ENCODE measurements at regions of chr9 and their contacts with region 1.

Region 1: GRCh38 chr9:136118320-136119060 is at the start of gene TMEM250:
- DNase-seq: peak; percentile 96
- ATAC-seq: peak; percentile 89
- H3K4me3 Mint-ChIP-seq: peak within 1 kb of the TSS; percentile 81
- H3K27ac Mint-ChIP-seq: peak within 1 kb of the TSS; percentile 74
- H3K4me1 Mint-ChIP-seq: peaks cover 7% of the 10 kb centered on the region
- H3K27me3 Mint-ChIP-seq: no peaks in the 10 kb centered on the region
- CTCF ChIP-seq: no peak
- total RNA-seq, gene TMEM250: 23.3 and 23.4 TPM in 2 replicates

Region 2: GRCh38 chr9:134475011-134475790 is 1643.3 kb before region 1 on chr9:
- CTCF ChIA-PET with region 1: no interaction called
- POLR2A ChIA-PET with region 1: no interaction called
- intact Hi-C with region 1: no loop called
- DNase-seq: peak; percentile 29
- ATAC-seq: peak; percentile 91
- H3K4me3 Mint-ChIP-seq: no peak overlapping the region
- H3K27ac Mint-ChIP-seq: peak overlapping the region; percentile 86
- H3K4me1 Mint-ChIP-seq: peaks cover 10% of the 10 kb centered on the region
- H3K27me3 Mint-ChIP-seq: no peaks in the 10 kb centered on the region
- CTCF ChIP-seq: no peak

Region 3: DNA sequence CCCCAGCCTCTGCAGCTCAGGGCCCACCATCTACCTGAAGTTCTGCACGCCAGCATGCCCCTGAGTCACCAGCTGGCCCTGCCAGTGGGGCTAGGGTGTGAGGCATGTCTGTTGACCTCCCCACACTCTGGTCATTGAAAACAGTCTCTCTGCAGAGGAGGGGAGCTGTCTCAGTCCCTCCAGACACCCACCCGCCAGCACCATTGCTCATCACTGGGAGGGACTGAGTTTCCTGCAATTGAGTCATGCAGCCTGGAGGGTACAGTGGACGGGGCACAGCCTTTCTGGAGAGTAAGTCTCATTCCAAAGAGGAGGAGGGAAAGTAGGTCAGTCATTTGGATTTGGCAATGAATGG is 1493.7 kb before region 1 on chr9:
- CTCF ChIA-PET with region 1: no interaction called
- POLR2A ChIA-PET with region 1: no interaction called
- intact Hi-C with region 1: no loop called
- DNase-seq: no peak
- ATAC-seq: no peak
- H3K4me3 Mint-ChIP-seq: no peak overlapping the region
- H3K27ac Mint-ChIP-seq: no peak overlapping the region
- H3K4me1 Mint-ChIP-seq: no peaks in the 10 kb centered on the region
- H3K27me3 Mint-ChIP-seq: peaks cover 8% of the 10 kb centered on the region
- CTCF ChIP-seq: no peak

Region 4: GRCh38 chr9:135701959-135702721 is 416.4 kb before region 1 on chr9 and contains the start of gene KCNT1:
- CTCF ChIA-PET with region 1: interaction called, 4 read pairs
- POLR2A ChIA-PET with region 1: no interaction called
- intact Hi-C with region 1: loop called (anchors 5 kb)
- DNase-seq: peak; percentile 51
- ATAC-seq: no peak
- H3K4me3 Mint-ChIP-seq: no peak within 1 kb of the TSS
- H3K27ac Mint-ChIP-seq: no peak within 1 kb of the TSS
- H3K4me1 Mint-ChIP-seq: no peaks in the 10 kb centered on the region
- H3K27me3 Mint-ChIP-seq: peaks cover 5% of the 10 kb centered on the region
- CTCF ChIP-seq: no peak
- total RNA-seq, gene KCNT1: not detected in 2 replicates

Region 5: DNA sequence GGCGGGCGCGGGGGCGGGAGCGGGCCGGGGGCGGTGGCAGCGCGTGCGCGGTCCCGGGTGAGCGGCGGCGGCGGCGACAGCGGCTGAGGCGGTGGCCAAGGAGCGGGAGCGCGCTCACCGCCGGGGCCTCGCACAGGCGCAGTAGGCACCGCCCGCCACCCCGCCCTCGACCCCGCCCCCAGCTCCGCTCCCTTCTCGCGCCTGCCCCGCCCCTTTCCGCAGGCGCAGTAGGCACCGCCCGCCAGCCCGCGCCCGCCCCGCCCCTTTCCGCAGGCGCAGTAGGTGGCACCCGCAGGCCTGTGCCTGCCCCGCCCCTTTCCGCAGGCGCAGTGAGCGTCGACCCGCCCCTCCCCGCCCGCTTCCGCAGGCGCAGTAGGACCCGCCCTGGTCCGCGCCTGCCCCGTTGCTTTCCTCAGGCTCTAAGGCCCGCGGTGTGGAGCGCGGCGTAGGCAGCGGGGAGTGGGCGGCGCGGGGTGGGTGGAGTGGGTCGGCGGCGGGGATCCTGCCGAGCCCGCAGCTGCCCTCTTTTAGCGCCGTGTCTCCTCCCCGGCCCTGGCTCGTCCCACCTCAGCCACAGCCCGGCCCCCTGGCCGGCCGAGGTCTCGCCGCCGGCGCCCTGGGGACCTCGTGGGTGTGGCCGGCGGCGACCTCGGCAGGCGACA is 210.9 kb before region 1 on chr9 and contains the start of gene CAMSAP1:
- CTCF ChIA-PET with region 1: no interaction called
- POLR2A ChIA-PET with region 1: interaction called, 3 read pairs
- intact Hi-C with region 1: loop called (anchors 1 kb)
- DNase-seq: peak; percentile 94
- ATAC-seq: peak; percentile 90
- H3K4me3 Mint-ChIP-seq: peak within 1 kb of the TSS; percentile 78
- H3K27ac Mint-ChIP-seq: peak within 1 kb of the TSS; percentile 69
- H3K4me1 Mint-ChIP-seq: peaks cover 44% of the 10 kb centered on the region
- H3K27me3 Mint-ChIP-seq: no peaks in the 10 kb centered on the region
- CTCF ChIP-seq: no peak
- total RNA-seq, gene CAMSAP1: 16.9 and 23.7 TPM in 2 replicates

Region 6: DNA sequence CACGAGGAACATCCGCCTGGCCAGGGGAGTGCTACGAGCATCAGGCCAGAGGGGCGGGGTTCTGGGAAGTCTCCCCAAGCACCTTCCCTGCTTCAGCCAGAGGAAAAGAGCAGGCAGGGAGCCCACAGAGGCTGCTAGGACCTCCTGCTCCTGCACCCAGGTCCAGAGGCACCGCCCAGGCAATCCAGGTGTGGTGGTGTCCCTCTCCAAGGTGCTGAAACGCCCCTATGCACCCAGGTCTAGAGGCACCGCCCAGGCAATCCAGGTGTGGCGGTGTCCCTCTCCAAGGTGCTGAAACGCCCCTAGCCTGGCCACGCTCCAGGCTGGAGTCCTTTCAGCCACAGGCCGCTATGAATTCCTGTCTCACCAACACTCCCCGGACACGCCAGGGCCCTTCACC is 146.6 kb before region 1 on chr9:
- CTCF ChIA-PET with region 1: interaction called, 68 read pairs
- POLR2A ChIA-PET with region 1: interaction called, 9 read pairs
- intact Hi-C with region 1: loop called (anchors 1 kb)
- DNase-seq: no peak
- ATAC-seq: peak; percentile 36
- H3K4me3 Mint-ChIP-seq: no peak overlapping the region
- H3K27ac Mint-ChIP-seq: no peak overlapping the region
- H3K4me1 Mint-ChIP-seq: peaks cover 7% of the 10 kb centered on the region
- H3K27me3 Mint-ChIP-seq: peaks cover 29% of the 10 kb centered on the region
- CTCF ChIP-seq: no peak

Region 7: GRCh38 chr9:136225748-136226679 is 107.5 kb after region 1 on chr9:
- CTCF ChIA-PET with region 1: no interaction called
- POLR2A ChIA-PET with region 1: no interaction called
- intact Hi-C with region 1: loop called (anchors 5 kb)
- DNase-seq: peak; percentile 70
- ATAC-seq: peak; percentile 78
- H3K4me3 Mint-ChIP-seq: peak overlapping the region; percentile 79
- H3K27ac Mint-ChIP-seq: peak overlapping the region; percentile 98
- H3K4me1 Mint-ChIP-seq: peaks cover 80% of the 10 kb centered on the region
- H3K27me3 Mint-ChIP-seq: no peaks in the 10 kb centered on the region
- CTCF ChIP-seq: peak; percentile 30

Region 8: DNA sequence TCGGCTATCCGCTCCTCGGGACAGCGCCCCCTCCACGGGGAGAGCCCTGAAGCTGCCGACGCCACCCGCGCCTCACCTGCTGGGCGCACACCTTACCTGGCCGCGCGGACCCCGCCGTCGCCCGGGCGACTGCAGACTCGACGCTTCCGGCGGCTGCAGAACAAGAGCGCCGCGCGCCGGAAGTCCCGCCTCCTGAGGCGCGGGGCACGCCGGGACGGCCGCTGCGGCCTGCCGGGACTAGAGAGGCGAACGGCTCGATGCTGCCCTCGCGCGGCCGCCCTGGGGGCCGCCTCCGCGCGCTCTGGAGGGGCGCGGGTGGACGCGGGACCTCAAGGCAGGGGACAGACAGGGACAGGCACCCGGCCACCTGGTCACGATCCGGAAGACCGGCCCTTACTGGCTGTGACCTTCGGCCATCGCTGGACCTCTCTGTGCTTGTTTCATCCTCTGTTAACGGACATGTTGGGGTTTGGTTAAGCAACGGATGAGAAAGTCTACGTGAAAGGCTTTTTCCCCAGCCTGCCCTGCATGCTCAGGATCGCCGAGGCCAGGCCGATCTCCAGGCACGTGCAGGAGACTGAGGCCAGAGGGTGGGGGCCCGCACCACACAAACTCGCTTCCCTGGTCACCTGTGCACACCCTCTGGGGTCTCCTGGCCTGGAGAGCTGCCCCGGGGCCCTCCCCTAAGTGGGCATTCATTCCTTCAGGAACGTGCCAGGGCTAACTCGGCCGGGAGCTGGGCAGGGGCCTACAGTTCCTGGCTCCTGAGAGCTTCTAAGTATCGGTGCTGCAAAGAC is 281.7 kb after region 1 on chr9 and contains the start of gene SNAPC4:
- CTCF ChIA-PET with region 1: no interaction called
- POLR2A ChIA-PET with region 1: interaction called, 4 read pairs
- intact Hi-C with region 1: loop called (anchors 5 kb)
- DNase-seq: peak; percentile 88
- ATAC-seq: peak; percentile 76
- H3K4me3 Mint-ChIP-seq: peak within 1 kb of the TSS; percentile 87
- H3K27ac Mint-ChIP-seq: peak within 1 kb of the TSS; percentile 46
- H3K4me1 Mint-ChIP-seq: peaks cover 48% of the 10 kb centered on the region
- H3K27me3 Mint-ChIP-seq: no peaks in the 10 kb centered on the region
- CTCF ChIP-seq: peak; percentile 21
- total RNA-seq, gene SNAPC4: 20.0 and 22.2 TPM in 2 replicates